ENCODE measurements at regions of chr10 and their contacts with region 1.

Region 1: DNA sequence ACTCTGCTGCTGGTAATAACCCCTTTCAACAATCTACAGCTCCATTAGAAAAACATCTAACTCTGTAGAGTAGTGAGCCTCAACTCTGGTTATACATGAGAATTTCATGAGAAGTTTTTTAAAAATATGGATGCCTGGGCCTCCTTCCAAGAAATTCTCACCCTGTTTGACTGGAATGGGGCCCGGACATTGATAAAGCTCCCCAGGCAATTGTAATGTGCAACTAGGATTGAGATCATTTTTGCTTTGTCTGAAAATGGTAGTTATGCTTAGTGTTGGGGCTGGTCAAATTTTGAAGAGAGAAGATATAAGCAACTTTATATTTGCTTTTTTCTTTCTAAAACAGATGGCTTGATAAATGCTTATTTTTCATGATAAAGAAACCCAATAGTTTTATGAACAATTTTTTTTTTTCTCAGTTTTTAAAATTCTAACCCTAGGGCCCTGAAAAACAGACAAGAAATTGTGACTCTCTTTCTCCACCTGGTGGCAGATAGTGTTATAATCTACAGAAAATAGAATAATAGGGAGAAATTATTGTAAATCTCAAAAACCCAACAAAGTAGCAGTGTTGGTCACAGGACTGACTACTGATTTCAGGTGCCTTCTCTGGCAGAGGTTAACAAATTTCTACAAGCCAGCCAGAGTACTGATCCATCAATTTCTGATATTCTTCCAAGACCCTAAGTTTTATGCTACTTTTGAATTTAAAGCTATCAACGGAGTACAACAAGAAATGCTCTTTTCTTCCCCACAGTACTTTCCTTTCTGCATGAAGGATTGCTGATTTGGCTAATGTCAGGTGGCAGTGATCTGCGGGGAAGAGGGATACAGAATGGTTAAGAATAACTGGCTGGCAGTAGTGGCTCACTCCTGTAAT is 174.8 kb downstream of the DKK1 start:
- DNase-seq: peak; percentile 99
- ATAC-seq: peak; percentile 21
- H3K4me3 ChIP-seq: peak overlapping the region; percentile 10; the same call in 1 of the 2 replicates
- H3K27ac ChIP-seq: peak overlapping the region; percentile 78
- H3K4me1 ChIP-seq: peaks cover 64% of the 10 kb centered on the region
- H3K27me3 ChIP-seq: no peaks in the 10 kb centered on the region
- CTCF ChIP-seq: peak; percentile 99

Region 2: GRCh38 chr10:52232561-52233350 is 256.1 kb before region 1 on chr10:
- CTCF ChIA-PET with region 1: no interaction called
- POLR2A ChIA-PET with region 1: no interaction called
- intact Hi-C with region 1: loop called (anchors 5 kb)
- DNase-seq: peak; percentile 46
- ATAC-seq: peak; percentile 76
- H3K4me3 ChIP-seq: peak overlapping the region; percentile 61
- H3K27ac ChIP-seq: peak overlapping the region; percentile 14
- H3K4me1 ChIP-seq: peaks cover 25% of the 10 kb centered on the region
- H3K27me3 ChIP-seq: no peaks in the 10 kb centered on the region
- CTCF ChIP-seq: no peak

Region 3: DNA sequence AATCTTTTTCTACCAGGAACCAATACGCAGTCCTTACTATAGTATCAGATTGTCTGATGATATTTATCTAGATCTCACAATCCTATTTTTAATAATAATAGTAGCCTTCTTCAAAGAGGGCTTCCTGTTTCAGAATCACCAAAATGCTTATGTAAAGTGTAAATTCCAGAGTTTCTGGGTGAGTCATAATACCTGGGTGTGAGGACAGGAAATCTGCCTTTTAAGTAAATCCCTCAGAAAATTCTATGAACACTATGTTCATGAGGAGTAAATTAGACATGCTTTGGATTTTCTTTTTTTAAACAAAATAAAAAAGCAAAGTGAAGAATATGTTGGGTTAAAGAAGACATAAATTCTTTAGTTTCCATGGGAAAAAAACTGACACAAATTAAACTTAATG is 154.3 kb before region 1 on chr10:
- CTCF ChIA-PET with region 1: interaction called, 4 read pairs
- POLR2A ChIA-PET with region 1: no interaction called
- intact Hi-C with region 1: loop called (anchors 5 kb)
- DNase-seq: peak; percentile 93
- ATAC-seq: peak; percentile 53
- H3K4me3 ChIP-seq: 0 out of 2 replicates have a peak overlapping the region, but pooled peaks have one; percentile 0
- H3K27ac ChIP-seq: peak overlapping the region; percentile 74
- H3K4me1 ChIP-seq: peaks cover 52% of the 10 kb centered on the region
- H3K27me3 ChIP-seq: no peaks in the 10 kb centered on the region
- CTCF ChIP-seq: no peak

Region 4: DNA sequence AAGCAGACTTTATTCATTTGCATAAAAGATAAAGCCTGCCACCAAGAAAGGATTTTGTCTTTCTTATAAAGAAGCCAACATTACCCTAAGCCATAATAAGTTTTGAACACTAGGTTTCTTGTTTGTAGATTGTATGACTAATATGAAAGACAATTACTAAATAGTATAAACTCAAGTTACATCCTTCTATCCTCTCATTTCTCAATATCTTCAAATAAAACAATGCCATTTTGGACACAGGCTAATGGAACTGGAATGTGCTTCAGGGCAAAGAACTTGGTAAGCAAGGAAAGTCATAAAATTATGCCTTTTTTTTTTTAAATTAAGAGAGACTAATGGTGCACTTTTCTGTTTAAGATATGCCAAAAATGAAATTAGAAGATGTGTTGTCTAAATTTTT is 37.0 kb before region 1 on chr10:
- CTCF ChIA-PET with region 1: interaction called, 5 read pairs
- POLR2A ChIA-PET with region 1: interaction called, 5 read pairs
- intact Hi-C with region 1: loop called (anchors 1 kb)
- DNase-seq: peak; percentile 100
- ATAC-seq: peak; percentile 65
- H3K4me3 ChIP-seq: peak overlapping the region; percentile 62
- H3K27ac ChIP-seq: peak overlapping the region; percentile 80
- H3K4me1 ChIP-seq: peaks cover 86% of the 10 kb centered on the region
- H3K27me3 ChIP-seq: no peaks in the 10 kb centered on the region
- CTCF ChIP-seq: no peak

Region 5: GRCh38 chr10:52566471-52567246 is 77.8 kb after region 1 on chr10:
- CTCF ChIA-PET with region 1: interaction called, 39 read pairs
- POLR2A ChIA-PET with region 1: interaction called, 4 read pairs
- intact Hi-C with region 1: loop called (anchors 1 kb)
- DNase-seq: peak; percentile 98
- ATAC-seq: peak; percentile 65
- H3K4me3 ChIP-seq: peak overlapping the region; percentile 39
- H3K27ac ChIP-seq: peak overlapping the region; percentile 49
- H3K4me1 ChIP-seq: peaks cover 42% of the 10 kb centered on the region
- H3K27me3 ChIP-seq: no peaks in the 10 kb centered on the region
- CTCF ChIP-seq: peak; percentile 100

Region 6: GRCh38 chr10:52729271-52730104 is 240.6 kb after region 1 on chr10:
- CTCF ChIA-PET with region 1: interaction called, 3 read pairs
- POLR2A ChIA-PET with region 1: interaction called, 5 read pairs
- intact Hi-C with region 1: loop called (anchors 1 kb)
- DNase-seq: peak; percentile 95
- ATAC-seq: peak; percentile 93
- H3K4me3 ChIP-seq: peak overlapping the region; percentile 41
- H3K27ac ChIP-seq: no peak overlapping the region
- H3K4me1 ChIP-seq: peaks cover 16% of the 10 kb centered on the region
- H3K27me3 ChIP-seq: no peaks in the 10 kb centered on the region
- CTCF ChIP-seq: peak; percentile 100

Measured in PC-3 (cell line).